ENCODE measurements at regions of chr12 and their contacts with region 1.

Region 1: GRCh38 chr12:113098446-113098896 is 37.1 kb downstream of the RASAL1 start:
- DNase-seq: peak; percentile 78 to 97
- H3K4me3 ChIP-seq: no peak overlapping the region
- H3K27ac ChIP-seq: no peak overlapping the region
- H3K4me1 ChIP-seq: peaks cover 0 to 11% (median 5%) of the 10 kb centered on the region in 4 experiments; a peak in 5 of 7 replicates
- H3K27me3 ChIP-seq: no peaks in the 10 kb centered on the region
- CTCF ChIP-seq: peak; percentile 95 to 97 (median 96)
- EP300 ChIP-seq: no peak
- POLR2A ChIP-seq: no peak
- RAD21 ChIP-seq: peak; percentile 96 to 97

Region 2: GRCh38 chr12:113005754-113006153 is 92.7 kb before region 1 on chr12:
- CTCF ChIA-PET with region 1: interaction called, 20 read pairs
- POLR2A ChIA-PET with region 1: no interaction called
- DNase-seq: no peak
- H3K4me3 ChIP-seq: no peak overlapping the region
- H3K27ac ChIP-seq: no peak overlapping the region
- H3K4me1 ChIP-seq: no peaks in the 10 kb centered on the region
- H3K27me3 ChIP-seq: peaks cover 0 to 7% (median 0%) of the 10 kb centered on the region in 4 experiments; a peak in 1 of 7 replicates
- CTCF ChIP-seq: peak in 2 of 3 experiments; percentile 48 to 55; a peak in 2 of 4 replicates
- EP300 ChIP-seq: no peak
- POLR2A ChIP-seq: no peak
- RAD21 ChIP-seq: peak; percentile 28 to 39; a peak in 3 of 4 replicates

Region 3: DNA sequence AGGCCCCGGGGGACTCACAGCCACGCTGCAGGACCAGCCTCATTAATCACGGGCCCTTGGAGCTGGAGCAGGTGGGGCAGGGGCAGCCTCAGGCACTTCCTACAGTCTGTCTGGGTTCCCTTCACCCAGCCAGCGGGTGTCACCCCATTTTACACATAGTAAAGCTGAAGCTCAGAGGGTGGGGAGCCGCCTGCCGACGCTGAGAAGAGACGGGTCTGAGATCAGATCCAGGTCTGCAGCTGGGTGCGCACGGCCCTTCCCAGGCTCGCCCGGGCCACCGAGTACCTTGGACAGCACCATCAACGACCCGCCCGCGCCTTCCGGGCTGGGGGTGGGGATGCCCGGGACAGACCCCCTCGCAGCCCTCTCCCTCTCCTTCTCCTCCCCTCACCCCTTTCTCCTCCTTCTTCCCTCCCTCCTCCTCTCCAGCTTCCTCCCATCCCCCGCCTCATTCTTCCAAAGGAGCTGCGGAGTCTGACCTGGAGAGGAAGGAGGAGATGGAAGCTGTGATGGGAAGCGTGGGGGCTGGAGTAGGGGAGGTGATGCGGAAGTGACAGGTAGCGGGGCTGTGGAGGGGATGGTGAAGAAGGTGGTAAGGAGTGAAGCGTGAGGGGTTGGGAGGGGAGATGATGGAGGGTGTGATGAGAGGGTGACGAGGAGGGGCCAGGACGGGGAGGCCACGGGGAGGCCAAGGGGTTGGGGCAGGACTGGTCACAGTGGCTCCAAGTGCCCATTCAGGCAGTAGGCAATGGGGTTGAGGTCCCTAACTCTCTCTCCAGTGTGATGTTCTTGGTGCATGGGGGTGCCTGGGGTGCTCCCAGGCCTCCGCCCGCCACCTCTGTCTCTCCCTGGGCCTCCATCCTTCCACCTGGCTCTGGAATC is 33.1 kb before region 1 on chr12:
- CTCF ChIA-PET with region 1: interaction called, 36 read pairs
- POLR2A ChIA-PET with region 1: interaction called, 3 read pairs
- DNase-seq: peak in 1 of 2 experiments; percentile 91
- H3K4me3 ChIP-seq: peak overlapping the region in 3 of 4 experiments; percentile 8 to 52 (median 19); a peak in 5 of 8 replicates
- H3K27ac ChIP-seq: no peak overlapping the region
- H3K4me1 ChIP-seq: peaks cover 0 to 27% (median 15%) of the 10 kb centered on the region in 4 experiments; a peak in 6 of 7 replicates
- H3K27me3 ChIP-seq: peaks cover 0 to 2% (median 0%) of the 10 kb centered on the region in 4 experiments; a peak in 3 of 7 replicates
- CTCF ChIP-seq: no peak
- EP300 ChIP-seq: no peak
- POLR2A ChIP-seq: no peak
- RAD21 ChIP-seq: no peak

Region 4: DNA sequence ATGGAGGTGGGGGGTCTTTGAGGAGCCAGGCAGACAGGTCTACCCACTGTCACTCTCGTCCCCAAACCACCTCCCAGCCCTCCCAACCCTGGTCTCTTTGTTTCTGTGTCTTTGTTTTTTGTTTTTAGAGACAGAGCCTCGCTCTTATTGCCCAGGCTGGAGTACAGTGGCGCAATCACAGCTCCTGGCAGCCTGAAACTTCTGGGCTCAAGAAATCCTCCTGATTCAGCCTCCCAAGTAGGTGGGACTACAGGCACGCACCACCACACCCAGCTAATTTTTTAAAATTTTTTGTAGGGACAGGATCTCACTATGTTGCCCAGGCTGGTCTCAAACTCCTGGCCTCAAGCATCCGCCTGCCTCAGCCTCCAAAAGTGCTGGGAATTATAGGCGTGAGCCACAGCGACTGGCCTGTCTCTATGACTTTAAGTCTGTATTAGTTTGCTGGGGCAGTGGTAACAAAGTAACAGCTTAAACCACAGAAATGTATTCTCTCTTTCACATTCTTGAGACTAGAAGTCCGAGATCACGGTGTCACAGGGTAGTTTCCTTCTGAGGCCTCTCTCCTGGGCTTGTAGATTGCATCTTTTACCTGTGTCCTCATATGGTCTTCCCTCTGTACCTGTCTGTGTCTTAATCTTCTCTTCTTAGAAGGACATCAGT is 15.9 kb before region 1 on chr12:
- CTCF ChIA-PET with region 1: interaction called, 11 read pairs
- POLR2A ChIA-PET with region 1: interaction called, 3 read pairs
- DNase-seq: no peak
- H3K4me3 ChIP-seq: no peak overlapping the region
- H3K27ac ChIP-seq: no peak overlapping the region
- H3K4me1 ChIP-seq: peaks cover 0 to 8% (median 7%) of the 10 kb centered on the region in 4 experiments; a peak in 5 of 7 replicates
- H3K27me3 ChIP-seq: peaks cover 9 to 13% (median 11%) of the 10 kb centered on the region in 4 experiments
- CTCF ChIP-seq: no peak
- EP300 ChIP-seq: no peak
- POLR2A ChIP-seq: no peak
- RAD21 ChIP-seq: no peak

Region 5: GRCh38 chr12:113152835-113153814 is 54.7 kb after region 1 on chr12:
- CTCF ChIA-PET with region 1: interaction called, 21 read pairs
- POLR2A ChIA-PET with region 1: interaction called, 4 read pairs
- DNase-seq: peak; percentile 51 to 86
- H3K4me3 ChIP-seq: peak overlapping the region; percentile 29 to 59 (median 50)
- H3K27ac ChIP-seq: no peak overlapping the region
- H3K4me1 ChIP-seq: peaks cover 7 to 23% (median 19%) of the 10 kb centered on the region in 4 experiments
- H3K27me3 ChIP-seq: peaks cover 1 to 34% (median 26%) of the 10 kb centered on the region in 4 experiments
- CTCF ChIP-seq: peak; percentile 53 to 61 (median 60)
- EP300 ChIP-seq: no peak
- POLR2A ChIP-seq: no peak
- RAD21 ChIP-seq: peak; percentile 64 to 74

Region 6: GRCh38 chr12:113174461-113175384 is 76.3 kb after region 1 on chr12:
- CTCF ChIA-PET with region 1: interaction called, 11 read pairs
- POLR2A ChIA-PET with region 1: interaction called, 3 read pairs
- DNase-seq: peak in 1 of 2 experiments; percentile 96
- H3K4me3 ChIP-seq: no peak overlapping the region
- H3K27ac ChIP-seq: no peak overlapping the region
- H3K4me1 ChIP-seq: no peaks in the 10 kb centered on the region
- H3K27me3 ChIP-seq: no peaks in the 10 kb centered on the region
- CTCF ChIP-seq: peak; percentile 88 to 97 (median 95)
- EP300 ChIP-seq: no peak
- POLR2A ChIP-seq: no peak
- RAD21 ChIP-seq: peak; percentile 86 to 89

Measured in H1 (cell line).